Activated naive CD4-positive, alpha-beta T cell treated with anti-CD3 and anti-CD28 coated beads for 36 hours (primary cell): ENCODE measurements at regions of chr3 and their contacts with region 1.

Region 1: DNA sequence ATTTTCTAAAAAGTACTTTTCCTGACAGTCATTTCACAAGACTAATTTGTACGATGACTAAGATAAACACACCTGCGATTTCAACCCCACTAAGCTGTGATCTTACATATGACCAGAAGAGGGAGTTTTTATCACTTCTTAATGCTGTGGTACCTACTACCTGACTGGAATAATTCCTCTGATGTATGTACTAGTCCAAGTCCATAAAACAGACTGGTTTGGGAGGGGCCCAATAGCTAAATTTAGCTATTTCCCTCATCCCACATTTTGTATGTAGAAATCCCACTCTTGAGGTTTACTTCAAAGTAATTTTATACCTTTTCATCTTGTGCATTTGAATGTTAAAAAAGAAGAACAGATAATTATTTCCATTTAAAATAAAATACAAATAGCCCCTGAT is 49.7 kb upstream of the SCAANT1 start:
- DNase-seq: no peak
- H3K4me3 Mint-ChIP-seq: no peak overlapping the region
- H3K27ac Mint-ChIP-seq: no peak overlapping the region
- H3K4me1 Mint-ChIP-seq: peaks cover 43% of the 10 kb centered on the region
- H3K27me3 Mint-ChIP-seq: no peaks in the 10 kb centered on the region

Region 2: GRCh38 chr3:63643882-63644797 is 317.8 kb before region 1 on chr3:
- CTCF ChIA-PET with region 1: no interaction called
- intact Hi-C with region 1: no loop called
- DNase-seq: no peak
- H3K4me3 Mint-ChIP-seq: no peak overlapping the region
- H3K27ac Mint-ChIP-seq: no peak overlapping the region
- H3K4me1 Mint-ChIP-seq: no peaks in the 10 kb centered on the region
- H3K27me3 Mint-ChIP-seq: peaks cover 10% of the 10 kb centered on the region

Region 3: DNA sequence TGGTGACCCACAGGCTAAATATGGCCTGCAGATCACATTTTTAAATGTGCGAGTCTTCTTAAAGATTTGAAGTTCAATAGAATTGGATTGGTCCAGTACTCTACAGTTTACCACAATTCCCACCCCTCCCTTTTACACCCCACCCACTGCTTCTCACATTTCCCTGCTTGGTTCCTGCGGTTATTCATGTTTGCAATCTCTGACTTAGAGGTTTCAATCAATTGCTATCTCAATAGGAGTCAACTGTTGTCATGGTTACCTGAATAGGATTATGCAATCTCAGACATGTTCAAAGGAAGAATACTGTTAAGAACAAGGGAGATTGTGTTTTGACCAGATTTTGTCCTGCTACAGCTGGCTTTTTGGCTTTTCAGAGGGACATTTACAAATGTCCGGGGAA is 147.7 kb before region 1 on chr3:
- CTCF ChIA-PET with region 1: no interaction called
- intact Hi-C with region 1: no loop called
- DNase-seq: no peak
- H3K4me3 Mint-ChIP-seq: no peak overlapping the region
- H3K27ac Mint-ChIP-seq: no peak overlapping the region
- H3K4me1 Mint-ChIP-seq: peaks cover 2% of the 10 kb centered on the region
- H3K27me3 Mint-ChIP-seq: no peaks in the 10 kb centered on the region

Region 4: GRCh38 chr3:63951492-63952247 is 10.2 kb before region 1 on chr3:
- CTCF ChIA-PET with region 1: interaction called, 15 read pairs
- intact Hi-C with region 1: no loop called
- DNase-seq: no peak
- H3K4me3 Mint-ChIP-seq: no peak overlapping the region
- H3K27ac Mint-ChIP-seq: no peak overlapping the region
- H3K4me1 Mint-ChIP-seq: peaks cover 44% of the 10 kb centered on the region
- H3K27me3 Mint-ChIP-seq: no peaks in the 10 kb centered on the region

Region 5: GRCh38 chr3:63975723-63976122 is 13.8 kb after region 1 on chr3:
- CTCF ChIA-PET with region 1: interaction called, 83 read pairs
- intact Hi-C with region 1: loop called (anchors 2 kb)
- DNase-seq: no peak
- H3K4me3 Mint-ChIP-seq: no peak overlapping the region
- H3K27ac Mint-ChIP-seq: peak overlapping the region; percentile 57
- H3K4me1 Mint-ChIP-seq: peaks cover 91% of the 10 kb centered on the region
- H3K27me3 Mint-ChIP-seq: no peaks in the 10 kb centered on the region